ENCODE measurements at regions of chr10 and their contacts with region 1.

Region 1: DNA sequence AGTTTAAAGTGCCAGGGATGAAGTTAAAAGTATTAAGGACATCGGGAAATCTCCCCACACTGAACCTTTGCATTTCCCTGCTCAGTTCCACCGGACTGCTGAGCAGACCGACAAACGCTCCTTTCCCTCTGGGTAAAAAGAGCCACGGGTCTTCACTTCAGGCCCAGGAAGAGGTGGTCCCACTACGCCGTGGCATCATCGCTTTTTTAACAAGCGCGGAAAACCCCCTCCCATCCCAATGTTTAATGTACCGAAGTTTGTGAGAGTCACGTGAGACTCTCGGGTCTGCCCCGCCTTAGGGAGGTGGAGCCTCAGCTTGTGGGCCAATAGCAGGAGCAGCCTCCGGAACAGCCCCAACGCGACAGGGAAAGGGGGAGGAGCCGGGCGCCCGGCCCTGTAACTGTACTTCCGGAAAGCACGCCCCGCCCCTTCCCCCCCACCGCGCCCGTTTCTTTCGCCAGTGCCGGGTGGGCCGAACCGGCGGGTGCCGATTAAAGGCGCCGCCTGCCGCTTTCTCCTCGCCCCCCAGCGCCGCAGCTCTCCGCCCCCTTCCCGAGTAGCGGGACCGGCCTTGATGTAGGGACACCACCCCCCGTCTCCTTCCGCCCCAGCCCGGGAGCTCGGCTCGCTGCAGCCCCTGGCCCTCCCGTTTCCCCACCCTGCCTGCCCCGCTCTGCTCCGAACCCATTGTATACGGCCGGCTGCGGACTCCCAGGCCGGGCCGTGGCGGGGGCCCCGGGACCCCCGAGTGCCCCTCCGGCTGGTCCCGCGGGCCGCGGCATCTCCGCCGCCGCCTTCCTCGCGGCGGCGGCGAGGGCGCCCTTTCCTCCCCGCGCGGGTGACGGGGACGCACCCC is 2.2 kb upstream of the TRIM8 start:
- DNase-seq: peak; percentile 88
- ATAC-seq: peak; percentile 65
- H3K4me3 Mint-ChIP-seq: peak overlapping the region; percentile 88
- H3K27ac Mint-ChIP-seq: peak overlapping the region; percentile 96
- H3K4me1 Mint-ChIP-seq: peaks cover 27% of the 10 kb centered on the region
- H3K27me3 Mint-ChIP-seq: no peaks in the 10 kb centered on the region
- CTCF ChIP-seq: no peak

Region 2: GRCh38 chr10:102114861-102115618 is 527.1 kb before region 1 on chr10:
- CTCF ChIA-PET with region 1: no interaction called
- POLR2A ChIA-PET with region 1: interaction called, 3 read pairs
- intact Hi-C with region 1: loop called (anchors 5 kb)
- DNase-seq: peak; percentile 70
- ATAC-seq: peak; percentile 78
- H3K4me3 Mint-ChIP-seq: peak overlapping the region; percentile 91
- H3K27ac Mint-ChIP-seq: peak overlapping the region; percentile 94
- H3K4me1 Mint-ChIP-seq: peaks cover 62% of the 10 kb centered on the region
- H3K27me3 Mint-ChIP-seq: no peaks in the 10 kb centered on the region
- CTCF ChIP-seq: no peak

Region 3: DNA sequence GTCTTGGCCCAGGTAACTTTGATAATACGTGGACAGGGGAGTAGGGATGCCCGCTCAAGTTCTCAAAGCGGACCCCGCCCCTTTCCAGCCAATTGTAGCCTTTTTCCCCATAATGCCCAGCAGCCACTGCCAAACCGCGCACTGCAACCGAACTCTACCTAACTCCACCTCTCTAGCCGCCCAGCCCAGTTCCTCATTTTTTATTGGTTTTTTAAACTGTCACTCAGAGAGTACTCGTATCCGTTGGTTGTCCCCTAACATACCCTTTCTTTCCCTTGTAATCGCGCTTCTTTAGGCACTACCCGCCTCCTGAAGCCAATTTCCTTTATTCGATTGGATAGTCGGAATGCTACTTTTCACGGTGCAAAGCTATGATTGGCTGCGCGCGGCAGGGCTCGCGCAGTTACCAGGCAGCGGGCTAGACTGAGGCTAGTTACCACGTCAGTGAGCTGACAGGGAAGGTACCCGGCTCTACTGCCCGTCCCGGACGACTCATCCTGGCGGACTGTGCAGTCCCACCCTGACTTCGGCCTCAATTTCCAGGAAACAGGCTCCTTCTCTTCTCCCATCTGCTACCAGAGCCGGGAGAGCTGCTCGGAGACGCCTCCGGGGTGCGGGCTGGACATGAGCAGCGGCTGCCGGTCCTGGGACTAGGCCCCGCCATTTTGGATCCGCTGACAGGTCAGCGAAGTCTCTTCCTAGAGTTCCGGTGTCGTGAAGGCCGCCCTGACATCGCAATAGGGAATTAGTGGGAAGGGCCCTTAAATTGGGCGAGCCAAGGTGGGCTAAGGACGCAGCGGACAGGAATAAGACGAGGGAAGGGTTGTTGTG is 396.8 kb before region 1 on chr10 and contains the start of gene GBF1:
- CTCF ChIA-PET with region 1: no interaction called
- POLR2A ChIA-PET with region 1: interaction called, 4 read pairs
- intact Hi-C with region 1: loop called (anchors 10 kb)
- DNase-seq: peak; percentile 76
- ATAC-seq: peak; percentile 88
- H3K4me3 Mint-ChIP-seq: peak within 1 kb of the TSS; percentile 98
- H3K27ac Mint-ChIP-seq: peak within 1 kb of the TSS; percentile 91
- H3K4me1 Mint-ChIP-seq: peaks cover 58% of the 10 kb centered on the region
- H3K27me3 Mint-ChIP-seq: peaks cover 22% of the 10 kb centered on the region
- CTCF ChIP-seq: no peak
- total RNA-seq, gene GBF1: 40.8 and 44.3 TPM in 2 replicates

Region 4: GRCh38 chr10:102608487-102608886 is 33.6 kb before region 1 on chr10:
- CTCF ChIA-PET with region 1: interaction called, 4 read pairs
- POLR2A ChIA-PET with region 1: no interaction called
- intact Hi-C with region 1: loop called (anchors 2 kb)
- DNase-seq: no peak
- ATAC-seq: no peak
- H3K4me3 Mint-ChIP-seq: no peak overlapping the region
- H3K27ac Mint-ChIP-seq: no peak overlapping the region
- H3K4me1 Mint-ChIP-seq: peaks cover 3% of the 10 kb centered on the region
- H3K27me3 Mint-ChIP-seq: no peaks in the 10 kb centered on the region
- CTCF ChIP-seq: no peak

Region 5: GRCh38 chr10:102678842-102679289 is 36.8 kb after region 1 on chr10:
- CTCF ChIA-PET with region 1: interaction called, 10 read pairs
- POLR2A ChIA-PET with region 1: interaction called, 78 read pairs
- intact Hi-C with region 1: loop called (anchors 2 kb)
- DNase-seq: peak; percentile 34
- ATAC-seq: no peak
- H3K4me3 Mint-ChIP-seq: no peak overlapping the region
- H3K27ac Mint-ChIP-seq: no peak overlapping the region
- H3K4me1 Mint-ChIP-seq: peaks cover 34% of the 10 kb centered on the region
- H3K27me3 Mint-ChIP-seq: no peaks in the 10 kb centered on the region
- CTCF ChIP-seq: no peak

Region 6: GRCh38 chr10:102917962-102918816 is 276.1 kb after region 1 on chr10 and contains the start of gene CNNM2:
- CTCF ChIA-PET with region 1: no interaction called
- POLR2A ChIA-PET with region 1: interaction called, 5 read pairs
- intact Hi-C with region 1: loop called (anchors 5 kb)
- DNase-seq: peak; percentile 96
- ATAC-seq: peak; percentile 89
- H3K4me3 Mint-ChIP-seq: peak within 1 kb of the TSS; percentile 96
- H3K27ac Mint-ChIP-seq: peak within 1 kb of the TSS; percentile 93
- H3K4me1 Mint-ChIP-seq: peaks cover 45% of the 10 kb centered on the region
- H3K27me3 Mint-ChIP-seq: peaks cover 10% of the 10 kb centered on the region
- CTCF ChIP-seq: no peak
- total RNA-seq, gene CNNM2: 5.5 and 7.3 TPM in 2 replicates